ENCODE measurements at regions of chr4 and their contacts with region 1.

Region 1: DNA sequence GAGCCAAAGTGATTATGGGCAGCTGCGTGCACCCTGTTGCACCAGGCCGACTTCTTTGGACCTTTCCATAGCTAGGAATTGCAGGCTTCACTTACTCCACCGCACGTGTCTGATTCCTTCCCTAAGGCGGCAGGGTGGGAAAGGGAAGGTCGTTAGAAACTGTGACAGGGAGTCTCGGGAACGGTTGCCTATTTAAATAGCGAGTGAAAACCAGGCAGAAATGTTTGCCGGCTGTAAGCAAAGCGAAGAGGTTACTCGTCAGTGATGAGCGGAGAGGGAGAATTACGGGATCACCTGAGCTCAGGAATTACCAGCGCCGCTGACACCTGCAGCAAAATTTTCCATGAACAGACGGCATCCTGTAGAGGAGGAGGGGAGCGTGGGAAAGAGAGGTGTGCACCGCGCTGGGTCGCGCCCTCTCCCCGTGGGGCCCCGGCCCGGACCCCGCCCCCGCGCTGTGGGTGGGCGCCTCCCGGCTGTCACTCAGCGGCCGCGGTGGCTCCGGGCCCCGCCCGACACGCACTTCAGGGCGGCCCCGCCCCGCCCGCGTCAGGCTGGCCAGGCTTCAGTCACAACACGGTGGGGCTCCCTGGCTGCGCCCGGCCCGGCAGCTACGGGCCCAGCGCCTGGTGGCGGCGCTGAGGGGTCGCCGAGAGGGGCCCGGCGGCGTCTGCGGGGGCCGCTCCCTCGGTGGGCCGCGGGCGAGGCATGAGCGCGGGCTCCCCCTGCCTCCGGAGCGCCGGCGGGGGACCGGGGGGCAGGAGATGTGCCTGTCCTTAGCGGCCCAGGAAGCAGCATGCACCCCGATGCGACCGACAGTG is at the start of gene SNX25:
- DNase-seq: peak; percentile 94
- H3K4me3 ChIP-seq: peak within 1 kb of the TSS; percentile 82 to 84
- H3K27ac ChIP-seq: peak within 1 kb of the TSS; percentile 87 to 95
- H3K4me1 ChIP-seq: peaks cover 25% of the 10 kb centered on the region
- H3K27me3 ChIP-seq: no peaks in the 10 kb centered on the region
- CTCF ChIP-seq: peak in 2 of 3 experiments; percentile 36 to 37
- POLR2A ChIP-seq: peak; percentile 81
- total RNA-seq, gene SNX25: 45.0 to 50.5 TPM

Region 2: GRCh38 chr4:184364100-184364921 is 844.9 kb before region 1 on chr4:
- intact Hi-C with region 1: no loop called
- DNase-seq: no peak
- H3K4me3 ChIP-seq: no peak overlapping the region
- H3K27ac ChIP-seq: no peak overlapping the region
- H3K4me1 ChIP-seq: no peaks in the 10 kb centered on the region
- H3K27me3 ChIP-seq: no peaks in the 10 kb centered on the region
- CTCF ChIP-seq: no peak
- POLR2A ChIP-seq: no peak

Region 3: DNA sequence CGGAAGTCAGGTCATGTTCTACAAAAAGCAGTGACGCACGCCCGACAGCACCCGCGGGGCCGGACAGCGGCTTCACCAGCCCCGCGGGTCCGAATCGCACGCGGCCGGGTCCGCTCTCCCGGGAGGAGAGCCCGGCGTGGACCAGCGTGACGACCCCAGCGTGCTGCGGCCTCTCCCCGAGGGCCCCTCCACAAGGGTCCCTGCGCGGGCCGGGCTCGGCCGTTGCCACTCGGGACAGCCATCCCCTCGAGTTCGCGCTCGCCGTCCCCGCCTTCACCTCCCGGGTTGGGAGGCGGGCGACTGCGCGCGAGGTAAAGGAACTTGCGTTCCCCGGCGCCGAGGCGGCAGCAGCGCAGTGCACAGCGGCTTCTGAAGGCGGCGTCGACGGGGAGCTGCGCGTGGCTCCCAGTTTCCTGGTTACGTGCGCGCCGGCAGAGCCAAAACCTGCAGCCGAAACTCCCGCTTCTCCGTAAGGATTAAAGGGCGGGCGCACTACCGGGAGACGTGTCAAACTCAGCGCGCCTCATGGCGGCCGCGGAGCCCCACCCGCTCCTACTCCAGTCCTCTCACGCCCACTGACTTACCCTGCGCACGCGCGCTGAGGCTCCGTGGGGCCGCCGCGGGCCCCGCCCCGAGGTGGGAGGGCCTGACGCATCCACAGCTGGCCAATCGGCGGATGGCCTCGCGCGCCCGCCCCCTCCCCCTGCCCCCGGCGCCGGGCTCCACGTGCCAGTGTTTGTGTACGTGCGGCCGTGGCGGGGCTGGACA is 186.9 kb after region 1 on chr4:
- intact Hi-C with region 1: loop called (anchors 5 kb)
- DNase-seq: peak; percentile 97
- H3K4me3 ChIP-seq: peak overlapping the region; percentile 65 to 80
- H3K27ac ChIP-seq: peak overlapping the region; percentile 97
- H3K4me1 ChIP-seq: no peaks in the 10 kb centered on the region
- H3K27me3 ChIP-seq: no peaks in the 10 kb centered on the region
- CTCF ChIP-seq: peak in 2 of 3 experiments; percentile 3 to 18
- POLR2A ChIP-seq: peak; percentile 68

Measured in testis (tissue), 5 donors.